ENCODE measurements at regions of chr1 and their contacts with region 1.

Region 1: DNA sequence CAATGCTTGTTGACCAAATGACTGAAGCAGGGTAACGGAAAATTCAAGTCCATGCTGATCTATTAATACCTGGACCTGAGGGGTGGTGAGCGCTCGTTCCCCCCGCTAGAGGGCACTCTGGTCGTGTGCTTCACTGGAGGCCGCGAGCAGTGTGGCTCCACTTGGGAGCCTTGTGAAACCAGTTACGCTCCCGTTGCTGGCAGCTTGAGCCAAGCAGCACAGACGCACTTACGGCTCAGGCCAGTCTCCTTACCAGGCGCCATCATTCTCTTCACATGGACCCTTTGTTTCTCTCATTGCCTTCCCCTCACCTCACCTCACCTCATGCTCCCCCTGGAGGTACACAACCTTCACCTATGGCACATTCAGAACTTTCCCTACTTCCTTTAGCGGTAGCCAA is 49.7 kb upstream of the TSPAN2 start:
- DNase-seq: peak; percentile 81 to 89
- H3K4me3 ChIP-seq: no peak overlapping the region
- H3K27ac ChIP-seq: peak overlapping the region; percentile 18; the same call in 1 of the 2 replicates
- H3K4me1 ChIP-seq: peaks cover 49% of the 10 kb centered on the region
- H3K27me3 ChIP-seq: no peaks in the 10 kb centered on the region
- CTCF ChIP-seq: peak; percentile 98

Region 2: DNA sequence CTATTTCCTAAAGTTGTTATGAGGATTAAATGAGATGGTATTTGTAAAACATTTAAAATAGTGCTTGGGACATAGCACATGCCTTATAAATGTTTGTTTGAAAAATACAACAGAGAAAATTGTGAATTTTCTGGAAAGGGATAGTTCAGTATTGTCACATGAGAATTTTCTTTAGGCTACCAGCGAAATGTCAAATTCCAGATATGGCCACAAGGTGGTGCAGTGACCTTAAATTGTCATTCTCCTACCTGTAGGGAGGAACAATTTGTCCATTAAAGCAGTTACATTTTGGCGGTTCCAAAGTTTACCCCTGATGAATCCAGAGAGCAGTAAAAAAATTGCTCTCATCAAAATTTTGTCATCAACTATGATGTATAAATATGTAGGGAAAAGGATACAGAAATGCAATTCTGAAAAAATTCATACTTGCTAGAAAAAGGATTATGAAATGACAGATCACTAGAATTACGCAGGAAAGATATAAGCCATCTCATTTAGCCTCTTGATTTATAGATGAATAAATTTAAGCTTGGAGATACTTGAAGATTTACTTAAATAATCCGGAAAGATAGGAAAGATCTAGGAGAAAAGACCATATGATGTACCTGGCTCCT is 159.6 kb before region 1 on chr1:
- CTCF ChIA-PET with region 1: interaction called, 3 read pairs
- POLR2A ChIA-PET with region 1: no interaction called
- intact Hi-C with region 1: loop called (anchors 1 kb)
- DNase-seq: peak; percentile 57 to 59
- H3K4me3 ChIP-seq: no peak overlapping the region
- H3K27ac ChIP-seq: no peak overlapping the region
- H3K4me1 ChIP-seq: no peaks in the 10 kb centered on the region
- H3K27me3 ChIP-seq: no peaks in the 10 kb centered on the region
- CTCF ChIP-seq: peak; percentile 96

Region 3: GRCh38 chr1:115012006-115012405 is 127.0 kb before region 1 on chr1:
- CTCF ChIA-PET with region 1: no interaction called
- POLR2A ChIA-PET with region 1: no interaction called
- intact Hi-C with region 1: no loop called
- DNase-seq: no peak
- H3K4me3 ChIP-seq: no peak overlapping the region
- H3K27ac ChIP-seq: no peak overlapping the region
- H3K4me1 ChIP-seq: no peaks in the 10 kb centered on the region
- H3K27me3 ChIP-seq: no peaks in the 10 kb centered on the region
- CTCF ChIP-seq: no peak

Region 4: DNA sequence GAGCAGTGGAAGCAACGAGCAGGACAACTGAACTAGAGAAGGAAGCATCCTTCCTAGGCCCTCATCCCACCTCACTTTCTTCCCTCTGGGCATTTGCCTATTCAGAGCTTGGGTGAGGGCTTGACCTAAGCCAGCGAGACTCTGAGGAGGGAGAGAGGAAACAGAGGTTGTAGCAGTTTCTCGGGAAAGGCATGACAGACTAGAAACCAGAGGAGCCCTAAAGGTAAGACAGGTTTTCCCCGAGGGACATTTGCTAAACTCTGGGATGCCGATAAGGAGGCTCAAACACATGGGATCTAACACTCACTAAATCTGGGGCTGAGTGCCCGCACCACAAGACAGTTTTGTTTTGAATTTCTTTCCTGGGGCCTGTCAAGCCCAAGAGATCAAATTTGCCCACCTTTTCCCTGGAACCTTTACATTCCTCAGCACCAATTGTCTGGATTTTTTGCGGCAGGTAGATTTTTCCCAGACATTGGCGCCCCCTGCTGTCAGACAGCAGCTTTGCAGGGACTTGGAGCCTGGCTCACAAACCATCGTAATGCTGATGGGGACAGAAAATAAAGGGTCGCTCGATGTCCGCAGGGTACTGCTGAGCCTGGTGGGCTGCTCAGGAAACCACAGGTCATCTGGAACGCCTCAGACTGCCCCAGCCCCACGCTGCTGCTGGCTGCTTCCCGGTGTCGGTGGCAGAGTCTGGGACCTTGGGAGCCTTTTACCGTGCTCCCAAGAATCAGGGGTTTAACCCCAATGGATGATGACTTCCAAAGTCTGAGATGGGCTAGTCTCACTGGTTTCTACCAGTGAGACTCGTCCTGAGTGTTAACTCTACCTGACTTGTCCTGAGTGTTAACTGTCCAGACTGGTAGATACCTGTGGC is 26.2 kb before region 1 on chr1:
- CTCF ChIA-PET with region 1: interaction called, 3 read pairs
- POLR2A ChIA-PET with region 1: no interaction called
- intact Hi-C with region 1: loop called (anchors 1 kb)
- DNase-seq: peak in 1 of 2 experiments; percentile 56
- H3K4me3 ChIP-seq: no peak overlapping the region
- H3K27ac ChIP-seq: no peak overlapping the region
- H3K4me1 ChIP-seq: peaks cover 63% of the 10 kb centered on the region
- H3K27me3 ChIP-seq: no peaks in the 10 kb centered on the region
- CTCF ChIP-seq: peak; percentile 99

Region 5: GRCh38 chr1:115189814-115190539 is 51.0 kb after region 1 on chr1:
- CTCF ChIA-PET with region 1: interaction called, 3 read pairs
- POLR2A ChIA-PET with region 1: interaction called, 14 read pairs
- intact Hi-C with region 1: loop called (anchors 1 kb)
- DNase-seq: peak; percentile 49 to 100
- H3K4me3 ChIP-seq: no peak overlapping the region; the same call in 1 of the 2 replicates
- H3K27ac ChIP-seq: peak overlapping the region; percentile 100
- H3K4me1 ChIP-seq: peaks cover 88% of the 10 kb centered on the region
- H3K27me3 ChIP-seq: no peaks in the 10 kb centered on the region
- CTCF ChIP-seq: no peak

Region 6: GRCh38 chr1:115426231-115426771 is 287.3 kb after region 1 on chr1:
- CTCF ChIA-PET with region 1: no interaction called
- POLR2A ChIA-PET with region 1: no interaction called
- intact Hi-C with region 1: loop called (anchors 2 kb)
- DNase-seq: peak; percentile 84 to 97
- H3K4me3 ChIP-seq: no peak overlapping the region
- H3K27ac ChIP-seq: peak overlapping the region; percentile 90
- H3K4me1 ChIP-seq: peaks cover 64% of the 10 kb centered on the region
- H3K27me3 ChIP-seq: no peaks in the 10 kb centered on the region
- CTCF ChIP-seq: no peak

Region 7: DNA sequence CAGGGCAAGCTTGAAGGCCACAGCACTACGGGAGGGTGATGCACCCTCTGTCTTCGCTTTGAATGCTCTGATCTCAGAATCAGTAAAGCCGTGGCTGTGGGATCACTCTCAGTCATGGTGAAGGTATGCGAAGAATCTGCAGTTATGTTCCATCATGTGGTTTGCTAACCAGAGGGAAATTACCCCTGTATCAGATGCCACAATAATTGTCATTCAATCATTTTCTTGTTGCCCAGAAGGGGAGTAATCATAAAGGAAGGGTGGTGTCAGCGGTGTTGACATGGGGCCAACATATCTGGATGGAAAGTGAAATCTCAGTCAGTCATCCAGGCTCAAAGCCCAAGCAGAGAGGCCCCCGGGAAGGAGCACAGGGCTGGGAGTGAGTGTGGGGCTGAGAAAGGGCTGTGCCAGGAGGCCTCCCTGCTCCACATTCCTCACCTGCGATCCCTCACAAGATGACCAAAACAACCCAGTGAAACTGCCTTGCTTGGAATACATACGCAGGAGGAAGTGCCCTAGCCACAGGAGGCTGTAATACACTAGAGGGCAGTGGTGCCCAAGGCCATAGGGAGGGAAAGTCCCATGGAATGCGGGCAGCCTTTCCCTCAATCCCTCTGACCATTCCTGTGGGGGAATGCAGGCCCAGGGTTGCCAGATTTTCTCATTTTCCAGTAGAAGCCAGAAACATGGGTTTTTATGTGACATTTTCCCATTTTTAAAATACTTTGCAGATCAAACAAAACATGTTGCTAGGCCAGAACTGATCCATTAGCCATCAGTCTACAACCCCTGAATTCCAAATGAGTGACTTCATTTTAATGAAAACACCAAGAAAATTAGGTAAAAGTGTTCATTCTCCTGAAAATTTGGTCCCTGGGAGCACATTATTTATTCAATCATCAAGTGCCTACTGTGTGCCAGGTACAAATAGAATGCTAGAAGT is 407.1 kb after region 1 on chr1:
- CTCF ChIA-PET with region 1: no interaction called
- POLR2A ChIA-PET with region 1: no interaction called
- intact Hi-C with region 1: loop called (anchors 1 kb)
- DNase-seq: peak; percentile 92 to 99
- H3K4me3 ChIP-seq: peak overlapping the region; percentile 9; the same call in 1 of the 2 replicates
- H3K27ac ChIP-seq: peak overlapping the region; percentile 91
- H3K4me1 ChIP-seq: peaks cover 35% of the 10 kb centered on the region
- H3K27me3 ChIP-seq: no peaks in the 10 kb centered on the region
- CTCF ChIP-seq: peak; percentile 82